Psoas muscle (tissue), 8 donors: ENCODE measurements at regions of chr4 and their contacts with region 1.

Region 1: GRCh38 chr4:56424697-56425514 is 10.5 kb downstream of the PPAT start:
- DNase-seq: no peak
- ATAC-seq: peak in 2 of 4 donors; percentile 53 to 71
- H3K4me3 ChIP-seq: no peak overlapping the region
- H3K27ac ChIP-seq: no peak overlapping the region
- H3K4me1 ChIP-seq: no peaks in the 10 kb centered on the region
- H3K27me3 ChIP-seq: no peaks in the 10 kb centered on the region
- CTCF ChIP-seq: peak; percentile 68

Region 2: DNA sequence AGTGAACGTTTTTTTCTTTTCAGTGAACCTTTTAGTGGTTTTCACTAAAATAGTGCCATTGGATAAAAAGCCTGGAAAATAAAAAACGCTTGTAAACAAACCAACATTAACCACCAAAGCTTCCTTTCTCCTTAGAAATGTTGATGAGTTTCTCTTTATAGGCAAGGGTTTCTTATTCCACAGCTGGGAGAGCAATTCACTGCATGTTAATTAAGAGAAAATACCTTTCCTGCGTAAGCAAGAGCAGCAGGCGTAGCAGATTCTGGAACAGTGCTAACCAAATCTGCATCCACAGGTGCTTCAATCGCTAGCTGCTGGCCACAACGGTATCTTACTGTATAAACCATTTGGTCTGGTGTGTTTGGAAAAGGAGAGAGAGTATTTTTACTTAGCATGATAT is 24.3 kb before region 1 on chr4:
- intact Hi-C with region 1: loop called in 1 of 2 experiments (anchors 2 kb)
- DNase-seq: no peak
- ATAC-seq: no peak
- H3K4me3 ChIP-seq: no peak overlapping the region
- H3K27ac ChIP-seq: no peak overlapping the region
- H3K4me1 ChIP-seq: no peaks in the 10 kb centered on the region
- H3K27me3 ChIP-seq: no peaks in the 10 kb centered on the region
- CTCF ChIP-seq: no peak

Region 3: DNA sequence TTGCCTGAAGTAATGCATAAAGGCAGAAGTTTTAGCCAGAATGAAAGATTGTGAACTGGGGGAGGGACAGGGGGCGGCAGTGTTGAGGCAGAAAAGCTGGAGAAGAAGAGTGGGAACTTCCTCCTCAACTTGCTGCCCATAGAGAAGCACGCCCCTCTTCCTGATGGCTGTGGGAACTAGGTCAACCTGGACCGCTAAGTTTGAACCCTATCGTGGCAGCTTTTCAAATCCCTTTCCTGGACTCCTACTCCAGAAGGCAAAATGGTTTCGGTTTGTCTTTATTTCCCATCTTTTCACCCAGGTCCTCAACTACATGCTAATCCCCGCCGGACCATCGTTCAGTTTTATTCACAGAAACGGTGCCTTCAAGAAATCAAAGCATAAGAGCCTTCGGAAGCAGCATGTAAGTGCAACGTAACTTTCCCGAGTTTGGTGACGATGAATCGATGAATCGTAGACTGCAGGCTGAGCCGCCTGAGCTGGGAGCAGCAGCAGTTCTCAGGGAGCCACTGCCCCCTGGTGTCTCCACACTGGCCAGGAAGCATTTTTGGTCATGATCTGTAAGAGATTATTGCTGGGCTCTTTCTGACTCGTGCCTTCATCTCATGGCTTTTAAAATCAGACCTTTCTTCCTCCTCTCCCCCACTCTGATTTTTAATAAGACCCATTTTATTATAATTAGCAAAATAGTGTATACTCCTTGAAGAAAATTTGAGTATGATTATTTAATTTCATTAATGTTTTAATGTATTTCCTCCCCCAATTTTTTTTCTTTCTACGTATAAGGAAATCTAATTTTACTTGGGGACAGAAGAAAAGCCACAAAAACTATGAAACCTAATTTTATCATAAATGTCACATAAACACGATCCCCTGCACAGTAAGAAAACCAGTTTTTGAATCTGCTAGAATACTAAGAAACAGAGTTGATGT is 375.2 kb after region 1 on chr4:
- intact Hi-C with region 1: loop called in 1 of 2 experiments (anchors 10 kb)
- DNase-seq: peak; percentile 77 to 87
- ATAC-seq: peak; percentile 94 to 100 (median 98)
- H3K4me3 ChIP-seq: peak overlapping the region; percentile 71
- H3K27ac ChIP-seq: peak overlapping the region; percentile 7
- H3K4me1 ChIP-seq: no peaks in the 10 kb centered on the region
- H3K27me3 ChIP-seq: no peaks in the 10 kb centered on the region
- CTCF ChIP-seq: peak; percentile 94

Region 4: DNA sequence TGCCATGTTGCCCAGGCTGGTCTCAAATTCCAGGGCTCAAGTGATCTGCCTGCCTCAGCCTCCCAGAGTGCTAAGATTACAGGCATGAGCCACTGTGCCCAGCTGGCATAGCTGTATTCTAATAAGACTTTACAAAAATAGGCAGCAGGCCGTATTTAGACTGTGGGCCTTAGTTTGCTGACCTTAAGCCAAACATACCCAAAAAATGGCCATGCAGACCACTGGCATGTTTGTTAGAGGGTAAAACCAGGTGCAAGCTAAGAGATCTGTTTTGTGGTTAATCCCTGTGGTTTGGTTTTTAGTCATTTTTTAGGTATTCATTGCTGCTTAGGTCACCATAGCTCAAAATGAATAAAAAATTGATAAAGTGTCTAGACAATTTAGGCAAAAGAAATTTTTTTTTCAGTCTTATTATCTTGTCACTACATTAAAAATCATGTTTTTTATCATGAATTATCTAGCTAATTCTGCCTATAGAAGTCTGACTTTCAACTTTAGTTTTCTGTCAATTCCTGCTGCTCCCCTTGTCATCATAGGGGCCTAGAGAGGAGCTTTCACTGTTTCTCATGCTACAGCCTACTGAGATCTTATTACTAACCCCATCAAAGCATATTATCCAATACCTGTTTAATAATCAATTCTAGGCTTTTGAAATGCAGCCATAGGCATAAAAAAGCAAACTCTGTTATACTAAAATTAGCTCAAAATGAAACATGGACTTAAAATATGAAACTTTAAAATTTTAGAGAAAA is 404.1 kb after region 1 on chr4:
- intact Hi-C with region 1: loop called in 1 of 2 experiments (anchors 10 kb)
- DNase-seq: no peak
- ATAC-seq: peak in 3 of 4 donors; percentile 50 to 62 (median 62)
- H3K4me3 ChIP-seq: no peak overlapping the region
- H3K27ac ChIP-seq: peak overlapping the region; percentile 20
- H3K4me1 ChIP-seq: peaks cover 3% of the 10 kb centered on the region
- H3K27me3 ChIP-seq: no peaks in the 10 kb centered on the region
- CTCF ChIP-seq: no peak

Region 5: GRCh38 chr4:56840559-56840958 is 415.7 kb after region 1 on chr4:
- intact Hi-C with region 1: loop called (anchors 2 to 10 kb)
- DNase-seq: no peak
- ATAC-seq: no peak
- H3K4me3 ChIP-seq: no peak overlapping the region
- H3K27ac ChIP-seq: no peak overlapping the region
- H3K4me1 ChIP-seq: no peaks in the 10 kb centered on the region
- H3K27me3 ChIP-seq: no peaks in the 10 kb centered on the region
- CTCF ChIP-seq: no peak